ENCODE measurements at regions of chr11 and their contacts with region 1.

Region 1: DNA sequence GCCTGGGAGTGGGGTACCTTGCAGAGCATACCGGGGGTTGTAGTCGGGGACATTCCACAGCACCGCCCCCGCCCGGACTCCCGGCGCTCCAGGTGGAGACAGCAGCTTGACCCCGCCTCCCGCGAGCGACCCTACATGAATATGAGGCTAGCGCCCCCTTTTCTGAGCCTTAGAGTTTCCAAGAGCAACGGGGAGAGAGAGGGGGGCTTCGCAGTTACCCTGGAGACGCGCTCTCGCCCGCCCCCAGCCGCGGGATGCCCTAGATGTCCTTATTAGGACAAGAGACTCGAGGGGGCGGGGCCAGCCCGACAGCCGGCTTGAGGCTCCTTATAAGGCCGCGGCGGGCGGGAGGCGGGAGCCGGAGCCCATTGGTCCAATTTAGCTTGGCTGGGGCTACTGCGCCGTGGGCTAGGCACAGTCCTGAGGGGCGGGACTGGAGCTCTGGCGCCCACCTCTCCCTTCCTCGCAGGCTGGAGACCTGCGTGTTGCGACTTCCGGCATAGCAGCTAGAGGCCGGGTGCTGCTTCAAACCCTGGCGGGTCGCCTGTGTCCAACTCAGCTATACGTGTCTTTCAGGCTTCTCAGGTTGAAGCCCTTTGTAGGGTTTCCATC is 927 bp upstream of the MUS81 start:
- DNase-seq: peak; percentile 99
- H3K4me3 Mint-ChIP-seq: peak overlapping the region; percentile 84
- H3K27ac Mint-ChIP-seq: peak overlapping the region; percentile 97
- H3K4me1 Mint-ChIP-seq: peaks cover 62% of the 10 kb centered on the region
- H3K27me3 Mint-ChIP-seq: no peaks in the 10 kb centered on the region

Region 2: GRCh38 chr11:65243773-65244172 is 615.5 kb before region 1 on chr11:
- CTCF ChIA-PET with region 1: no interaction called
- POLR2A ChIA-PET with region 1: no interaction called
- DNase-seq: no peak
- H3K4me3 Mint-ChIP-seq: no peak overlapping the region
- H3K27ac Mint-ChIP-seq: no peak overlapping the region
- H3K4me1 Mint-ChIP-seq: no peaks in the 10 kb centered on the region
- H3K27me3 Mint-ChIP-seq: no peaks in the 10 kb centered on the region

Region 3: DNA sequence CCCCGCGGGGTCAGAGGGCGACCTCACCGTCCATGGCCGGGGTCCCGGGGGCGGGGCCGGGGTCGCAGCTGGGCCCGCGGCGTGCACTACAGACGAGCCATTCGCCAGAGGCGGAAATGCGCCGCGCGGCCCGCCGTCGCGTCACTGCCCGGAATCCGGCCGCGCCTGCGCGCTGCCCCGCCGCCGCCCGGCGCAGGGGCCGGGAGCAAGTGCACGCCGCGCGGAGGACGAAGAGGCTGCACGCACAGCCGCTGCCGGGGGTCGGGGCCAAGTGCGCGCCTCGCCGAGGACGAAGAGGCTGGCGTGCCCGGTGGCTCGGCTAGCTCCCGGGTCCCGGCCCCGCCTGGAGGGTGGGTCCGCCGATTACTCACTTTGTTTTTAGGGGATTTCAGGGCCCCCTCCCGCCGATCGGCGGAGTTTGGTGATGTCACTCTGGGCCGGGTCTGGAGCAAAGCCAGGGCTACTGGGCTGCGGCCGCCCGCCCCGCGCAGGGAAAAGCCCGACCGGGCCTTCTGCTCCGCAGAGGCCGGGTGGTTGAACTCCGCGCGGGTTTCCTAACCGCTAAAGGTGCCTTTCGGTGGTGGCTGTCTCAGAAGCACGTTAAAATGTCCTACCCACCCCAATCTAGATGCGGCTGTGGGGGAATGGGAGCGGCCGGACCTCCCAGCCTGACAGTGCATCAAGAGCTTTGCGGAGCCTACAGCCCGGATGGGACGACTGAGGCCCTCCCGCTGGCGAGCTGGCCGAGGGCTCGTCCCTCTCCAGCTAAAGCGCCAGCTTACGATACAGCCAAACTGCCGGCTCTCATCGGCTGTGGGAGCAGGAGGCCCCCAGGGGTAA is 196.3 kb before region 1 on chr11 and contains the start of gene RELA:
- CTCF ChIA-PET with region 1: interaction called, 3 read pairs
- POLR2A ChIA-PET with region 1: interaction called, 11 read pairs
- DNase-seq: peak; percentile 91
- H3K4me3 Mint-ChIP-seq: peak within 1 kb of the TSS; percentile 89
- H3K27ac Mint-ChIP-seq: peak within 1 kb of the TSS; percentile 93
- H3K4me1 Mint-ChIP-seq: peaks cover 37% of the 10 kb centered on the region
- H3K27me3 Mint-ChIP-seq: no peaks in the 10 kb centered on the region
- total RNA-seq, gene RELA: 91.2 to 102 TPM

Region 4: GRCh38 chr11:65833297-65834030 is 25.8 kb before region 1 on chr11 and contains the start of gene SNX32:
- CTCF ChIA-PET with region 1: interaction called, 3 read pairs
- POLR2A ChIA-PET with region 1: interaction called, 28 read pairs
- DNase-seq: peak; percentile 96
- H3K4me3 Mint-ChIP-seq: no peak within 1 kb of the TSS
- H3K27ac Mint-ChIP-seq: peak within 1 kb of the TSS; percentile 29
- H3K4me1 Mint-ChIP-seq: peaks cover 19% of the 10 kb centered on the region
- H3K27me3 Mint-ChIP-seq: peaks cover 26% of the 10 kb centered on the region
- total RNA-seq, gene SNX32: 0.83 to 1.6 TPM

Region 5: DNA sequence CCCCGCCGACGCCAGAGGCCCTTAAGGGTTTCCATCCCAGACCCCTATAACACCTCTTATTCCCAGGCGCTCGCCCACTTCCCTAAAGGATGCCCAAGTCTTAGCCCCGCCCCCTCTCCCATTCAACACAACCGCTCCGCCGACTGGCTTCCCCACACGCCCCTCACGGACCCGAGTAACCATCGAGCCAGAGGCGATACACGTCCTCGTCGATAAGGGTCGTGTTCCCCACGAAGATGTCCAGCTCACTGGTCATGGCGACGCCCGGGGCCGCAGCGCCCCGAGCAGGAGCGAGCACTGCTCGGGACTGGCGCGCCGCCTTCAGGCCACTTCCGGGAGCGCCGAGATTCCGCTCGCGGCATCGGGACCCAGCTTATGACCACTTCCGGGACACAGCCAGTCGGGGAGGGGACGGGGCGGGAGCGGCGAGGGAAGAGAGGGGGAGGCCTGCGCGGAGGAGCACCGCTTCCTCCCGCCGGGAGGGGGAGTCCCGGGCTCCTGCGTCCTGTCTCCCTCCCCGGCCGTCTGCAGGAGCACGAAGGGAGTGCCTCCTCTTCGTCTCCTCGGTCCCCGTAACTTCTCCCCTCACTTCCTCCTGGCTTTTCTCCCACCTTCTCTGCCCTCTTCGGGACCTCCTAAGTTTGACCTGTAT is 29.0 kb after region 1 on chr11 and contains the start of gene FIBP:
- CTCF ChIA-PET with region 1: interaction called, 251 read pairs
- POLR2A ChIA-PET with region 1: interaction called, 284 read pairs
- DNase-seq: peak; percentile 98
- H3K4me3 Mint-ChIP-seq: peak within 1 kb of the TSS; percentile 97
- H3K27ac Mint-ChIP-seq: peak within 1 kb of the TSS; percentile 90
- H3K4me1 Mint-ChIP-seq: peaks cover 74% of the 10 kb centered on the region
- H3K27me3 Mint-ChIP-seq: no peaks in the 10 kb centered on the region
- total RNA-seq, gene FIBP: 71.7 to 77.4 TPM

Region 6: DNA sequence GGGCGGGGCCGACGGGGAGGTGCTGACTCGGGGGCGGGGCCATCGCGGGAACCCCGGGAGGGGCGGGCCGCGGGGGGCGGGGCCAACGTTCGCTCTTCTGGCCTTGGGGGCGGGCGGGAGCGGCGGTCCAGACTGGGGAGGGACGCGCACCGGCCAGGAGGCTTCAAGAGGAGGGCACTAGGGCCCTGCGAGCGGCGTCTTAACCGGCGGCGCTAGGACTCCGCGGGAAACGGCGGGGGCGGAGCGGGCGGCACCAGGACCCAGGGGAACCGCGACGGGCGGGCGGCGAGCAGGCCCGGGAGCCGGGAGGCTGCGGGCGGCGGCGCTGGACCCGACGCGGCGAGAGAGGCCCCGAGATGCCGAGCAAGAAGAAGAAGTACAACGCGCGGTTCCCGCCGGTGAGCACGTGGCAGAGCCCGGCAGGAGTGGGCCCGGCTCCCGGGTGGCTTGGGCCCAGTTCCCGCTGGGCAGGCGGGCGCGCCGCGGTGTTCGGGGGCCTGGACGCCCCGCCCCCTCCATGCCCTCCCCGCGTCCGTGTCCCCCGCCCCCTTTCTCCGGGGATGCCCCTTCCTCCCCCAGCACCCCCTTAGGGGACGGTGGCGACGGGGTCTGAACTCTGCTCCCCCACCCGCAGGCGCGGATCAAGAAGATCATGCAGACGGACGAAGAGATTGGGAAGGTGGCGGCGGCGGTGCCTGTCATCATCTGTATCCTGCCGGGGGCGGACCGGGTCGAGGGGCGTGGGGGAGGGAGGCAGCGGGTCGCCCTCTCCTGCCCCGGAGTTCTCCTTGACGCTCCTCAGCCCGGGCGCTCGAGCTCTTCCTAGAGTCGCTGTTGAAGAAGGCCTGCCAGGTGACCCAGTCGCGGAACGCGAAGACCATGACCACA is 60.1 kb after region 1 on chr11 and contains the start of gene DRAP1:
- CTCF ChIA-PET with region 1: interaction called, 7 read pairs
- POLR2A ChIA-PET with region 1: interaction called, 19 read pairs
- DNase-seq: peak; percentile 99
- H3K4me3 Mint-ChIP-seq: peak within 1 kb of the TSS; percentile 93
- H3K27ac Mint-ChIP-seq: peak within 1 kb of the TSS; percentile 87
- H3K4me1 Mint-ChIP-seq: peaks cover 42% of the 10 kb centered on the region
- H3K27me3 Mint-ChIP-seq: no peaks in the 10 kb centered on the region
- total RNA-seq, gene DRAP1: 162 to 180 TPM

Region 7: DNA sequence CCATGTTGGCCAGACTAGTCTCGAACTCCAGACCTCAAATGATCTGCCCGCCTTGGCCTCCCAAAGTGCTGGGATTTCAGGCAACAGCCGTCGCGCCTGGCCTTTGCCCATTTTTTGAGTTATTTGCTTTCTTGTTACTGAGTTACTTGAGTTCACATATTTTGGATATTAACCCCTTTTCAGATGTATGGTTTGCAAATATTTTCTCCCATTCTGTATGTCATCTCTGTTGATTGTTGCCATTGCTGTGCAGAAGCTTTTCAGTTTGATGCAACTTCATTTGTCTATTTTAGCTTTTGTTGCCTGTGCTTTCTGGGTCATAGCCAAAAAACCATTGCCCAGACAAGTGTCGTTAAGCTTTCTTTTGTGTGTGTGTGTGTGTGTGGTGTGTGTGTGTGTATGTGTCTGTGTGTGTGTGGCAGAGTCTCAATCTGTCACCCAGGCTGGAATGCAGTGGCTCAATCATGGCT is 92.8 kb after region 1 on chr11:
- CTCF ChIA-PET with region 1: no interaction called
- POLR2A ChIA-PET with region 1: no interaction called
- DNase-seq: no peak
- H3K4me3 Mint-ChIP-seq: no peak overlapping the region
- H3K27ac Mint-ChIP-seq: no peak overlapping the region
- H3K4me1 Mint-ChIP-seq: peaks cover 7% of the 10 kb centered on the region
- H3K27me3 Mint-ChIP-seq: peaks cover 7% of the 10 kb centered on the region

Region 8: DNA sequence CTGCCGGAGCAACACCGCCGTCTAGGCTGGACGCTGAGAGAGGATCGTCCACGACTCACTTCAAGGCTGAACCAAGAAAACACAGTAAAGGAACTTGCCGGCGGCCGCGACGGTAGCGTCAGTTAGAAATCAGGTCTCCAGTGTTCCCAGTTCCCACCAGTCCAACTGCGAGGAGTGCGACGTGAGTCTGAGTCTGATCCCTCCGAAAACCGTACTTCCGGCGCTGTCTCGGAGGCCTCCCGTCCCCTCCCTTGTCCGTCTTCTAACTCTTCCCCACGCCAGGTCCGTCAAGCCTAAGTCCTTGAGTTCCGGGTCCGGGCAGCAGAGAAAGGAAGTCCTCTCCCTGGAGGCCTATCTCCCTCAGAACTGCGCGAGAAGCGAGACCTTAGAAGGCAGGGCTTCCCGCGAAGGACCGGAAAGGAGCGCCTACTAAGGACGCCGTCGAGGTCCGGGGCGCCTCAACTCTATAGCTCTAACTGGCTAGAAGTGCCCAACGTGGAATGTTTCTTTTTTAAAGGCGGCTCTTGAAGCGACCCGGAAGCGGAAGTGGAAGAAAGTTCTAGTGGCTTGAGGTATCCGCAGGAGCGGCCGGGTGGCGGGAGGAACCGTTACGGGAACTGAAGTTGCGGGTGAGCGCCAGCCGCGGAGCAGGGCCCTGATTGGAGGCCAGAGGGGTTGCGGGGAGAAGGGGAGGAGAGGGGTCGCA is 142.8 kb after region 1 on chr11 and contains the starts of genes BANF1 and EIF1AD:
- CTCF ChIA-PET with region 1: interaction called, 8 read pairs
- POLR2A ChIA-PET with region 1: interaction called, 19 read pairs
- DNase-seq: peak; percentile 96
- H3K4me3 Mint-ChIP-seq: peak within 1 kb of the TSS; percentile 94
- H3K27ac Mint-ChIP-seq: peak within 1 kb of the TSS; percentile 95
- H3K4me1 Mint-ChIP-seq: peaks cover 48% of the 10 kb centered on the region
- H3K27me3 Mint-ChIP-seq: no peaks in the 10 kb centered on the region
- total RNA-seq, gene BANF1: 191 to 196 TPM
- total RNA-seq, gene EIF1AD: 43.6 to 45.9 TPM

Measured in activated CD4-positive, alpha-beta memory T cell treated with anti-CD3 and anti-CD28 coated beads, Interleukin-2, amount 10 ng/mL, durations not matched to agents 7 days and 5 days (primary cell).